ENCODE measurements at regions of chr1 and their contacts with region 1.

Region 1: GRCh38 chr1:182084487-182085316 is 23.2 kb upstream of the ZNF648 start:
- DNase-seq: peak; percentile 91
- ATAC-seq: peak; percentile 98

Region 2: DNA sequence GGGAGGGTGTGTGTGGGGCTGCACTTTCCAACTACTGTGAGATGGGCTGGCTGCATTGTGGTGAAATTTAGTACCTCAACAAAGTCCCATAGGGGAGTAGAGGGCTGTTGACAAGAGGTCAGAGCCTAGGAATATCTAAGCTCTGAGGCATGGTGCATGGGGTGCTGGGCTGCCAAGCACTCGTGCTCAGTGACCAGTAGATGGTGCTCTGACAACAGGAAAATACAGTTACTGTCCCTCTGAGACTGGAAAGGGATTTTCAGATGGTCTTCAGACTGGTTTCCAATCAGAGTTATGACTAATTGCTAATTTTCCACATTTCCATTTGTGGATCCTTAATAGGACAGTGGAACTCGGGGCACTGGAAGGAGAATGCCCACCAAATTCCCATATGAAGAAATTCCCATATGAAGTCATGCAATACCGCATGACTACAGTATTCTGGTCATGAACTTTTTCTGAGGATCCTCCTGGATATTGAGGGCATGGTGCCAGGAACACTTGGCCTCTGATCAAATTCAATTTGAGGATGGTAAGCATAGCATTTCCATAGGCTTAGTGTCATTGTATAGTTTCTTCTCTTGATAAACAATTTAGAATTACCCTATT is 605.5 kb before region 1 on chr1:
- intact Hi-C with region 1: loop called (anchors 5 kb)
- DNase-seq: peak; percentile 69
- ATAC-seq: peak; percentile 90

Region 3: GRCh38 chr1:182003953-182004586 is 80.6 kb before region 1 on chr1:
- intact Hi-C with region 1: no loop called
- DNase-seq: peak; percentile 63
- ATAC-seq: no peak

Region 4: DNA sequence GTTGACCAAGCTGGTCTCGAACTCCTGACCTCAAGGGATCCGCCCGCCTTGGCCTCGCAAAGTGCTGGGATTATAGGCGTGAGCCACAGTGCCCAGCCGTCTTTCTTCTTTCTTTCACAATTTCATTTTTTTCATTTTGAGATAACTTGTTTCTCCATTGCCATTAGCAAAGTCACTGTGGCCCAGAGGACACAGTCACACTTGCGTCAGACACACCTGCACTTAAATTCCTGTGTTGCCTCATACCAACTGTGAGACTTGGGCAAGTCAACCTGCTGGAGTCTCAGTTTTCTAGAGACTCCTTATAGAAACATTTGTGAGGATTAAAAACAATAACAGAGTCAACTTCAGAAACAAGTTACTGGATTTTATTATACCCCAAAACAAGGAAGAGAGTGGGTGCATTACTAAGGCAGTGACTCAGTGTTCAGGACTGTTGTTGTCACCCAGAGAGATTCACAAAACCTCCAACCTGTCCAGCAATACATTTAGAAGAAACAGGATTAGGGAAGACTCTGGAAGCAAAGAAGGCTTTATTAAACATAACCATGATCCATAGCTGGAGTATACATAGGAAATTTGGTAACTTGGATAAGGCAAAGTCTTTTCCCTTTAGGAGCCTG is 313.2 kb after region 1 on chr1:
- intact Hi-C with region 1: loop called (anchors 2 kb)
- DNase-seq: no peak
- ATAC-seq: no peak

Region 5: GRCh38 chr1:182604169-182605164 is 519.8 kb after region 1 on chr1 and contains the start of gene RGS16:
- intact Hi-C with region 1: loop called (anchors 5 kb)
- DNase-seq: peak; percentile 97
- ATAC-seq: peak; percentile 98
- total RNA-seq, gene RGS16: 1.0 TPM

Region 6: GRCh38 chr1:182789138-182790076 is 704.7 kb after region 1 on chr1 and contains the start of gene NPL:
- intact Hi-C with region 1: loop called (anchors 10 kb)
- DNase-seq: peak; percentile 93
- ATAC-seq: peak; percentile 99
- total RNA-seq, gene NPL: 5.3 TPM